ENCODE measurements at regions of chr3 and their contacts with region 1.

Region 1: GRCh38 chr3:51682079-51682478 is 11.0 kb downstream of the TEX264 start:
- DNase-seq: peak; percentile 91
- ATAC-seq: peak; percentile 81
- H3K4me3 Mint-ChIP-seq: peak overlapping the region; percentile 73
- H3K27ac Mint-ChIP-seq: peak overlapping the region; percentile 87
- H3K4me1 Mint-ChIP-seq: peaks cover 96% of the 10 kb centered on the region
- H3K27me3 Mint-ChIP-seq: no peaks in the 10 kb centered on the region

Region 2: GRCh38 chr3:51498876-51499738 is 183.0 kb before region 1 on chr3:
- CTCF ChIA-PET with region 1: interaction called, 179 read pairs
- POLR2A ChIA-PET with region 1: interaction called, 39 read pairs
- DNase-seq: peak; percentile 89
- ATAC-seq: peak; percentile 77
- H3K4me3 Mint-ChIP-seq: peak overlapping the region; percentile 84
- H3K27ac Mint-ChIP-seq: peak overlapping the region; percentile 98
- H3K4me1 Mint-ChIP-seq: peaks cover 23% of the 10 kb centered on the region
- H3K27me3 Mint-ChIP-seq: no peaks in the 10 kb centered on the region

Region 3: GRCh38 chr3:51538459-51539290 is 143.4 kb before region 1 on chr3 and contains the start of gene RAD54L2:
- CTCF ChIA-PET with region 1: interaction called, 18 read pairs
- POLR2A ChIA-PET with region 1: no interaction called
- DNase-seq: peak; percentile 75
- ATAC-seq: peak; percentile 93
- H3K4me3 Mint-ChIP-seq: peak within 1 kb of the TSS; percentile 86
- H3K27ac Mint-ChIP-seq: peak within 1 kb of the TSS; percentile 84
- H3K4me1 Mint-ChIP-seq: peaks cover 33% of the 10 kb centered on the region
- H3K27me3 Mint-ChIP-seq: no peaks in the 10 kb centered on the region
- total RNA-seq, gene RAD54L2: 28.8 to 28.9 TPM

Region 4: DNA sequence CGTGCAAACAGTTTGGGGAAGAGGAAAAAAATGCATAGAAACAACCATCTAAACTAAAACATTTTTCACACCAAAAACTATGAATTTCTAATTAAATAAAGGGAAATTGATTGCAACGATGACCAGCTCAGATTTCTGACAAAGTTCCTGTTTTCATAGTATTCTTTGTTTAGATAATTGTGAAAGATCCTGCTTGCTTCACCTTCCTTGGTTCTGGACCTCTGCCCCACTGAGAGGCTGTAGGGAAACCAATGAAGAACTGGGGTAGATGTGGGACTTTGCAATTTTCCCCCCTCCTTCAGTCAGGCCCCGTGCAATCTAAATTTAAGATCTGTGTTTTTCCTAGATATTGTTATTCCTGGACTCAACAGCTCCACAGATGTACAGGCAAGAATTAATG is 24.8 kb before region 1 on chr3:
- CTCF ChIA-PET with region 1: interaction called, 10 read pairs
- POLR2A ChIA-PET with region 1: no interaction called
- DNase-seq: no peak
- ATAC-seq: no peak
- H3K4me3 Mint-ChIP-seq: no peak overlapping the region
- H3K27ac Mint-ChIP-seq: no peak overlapping the region
- H3K4me1 Mint-ChIP-seq: no peaks in the 10 kb centered on the region
- H3K27me3 Mint-ChIP-seq: no peaks in the 10 kb centered on the region

Region 5: DNA sequence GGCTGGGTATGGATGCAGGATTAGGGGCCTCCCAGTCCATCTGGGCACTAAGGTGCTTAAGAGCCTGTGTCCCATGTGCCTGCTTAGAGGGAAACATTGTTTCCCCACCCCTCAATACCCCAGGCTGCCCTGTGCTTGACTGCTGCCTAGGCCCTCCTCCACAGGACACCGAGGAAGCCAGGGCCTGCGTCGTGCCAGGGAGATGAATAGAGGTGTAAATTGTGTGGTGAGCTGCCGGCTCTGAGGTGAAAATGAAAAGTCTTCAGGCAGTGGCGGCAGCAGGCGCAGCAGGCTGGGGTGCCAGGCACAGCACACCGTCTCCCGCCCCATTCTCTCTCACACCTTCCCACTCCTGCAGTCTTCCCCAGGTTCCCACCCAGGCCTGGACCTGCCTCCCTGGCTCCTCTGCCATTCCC is 10.9 kb after region 1 on chr3:
- CTCF ChIA-PET with region 1: interaction called, 16 read pairs
- POLR2A ChIA-PET with region 1: no interaction called
- DNase-seq: no peak
- ATAC-seq: no peak
- H3K4me3 Mint-ChIP-seq: no peak overlapping the region
- H3K27ac Mint-ChIP-seq: no peak overlapping the region
- H3K4me1 Mint-ChIP-seq: peaks cover 24% of the 10 kb centered on the region
- H3K27me3 Mint-ChIP-seq: no peaks in the 10 kb centered on the region

Region 6: GRCh38 chr3:51799879-51800749 is 118.0 kb after region 1 on chr3:
- CTCF ChIA-PET with region 1: interaction called, 10 read pairs
- POLR2A ChIA-PET with region 1: no interaction called
- DNase-seq: peak; percentile 63
- ATAC-seq: peak; percentile 52
- H3K4me3 Mint-ChIP-seq: no peak overlapping the region
- H3K27ac Mint-ChIP-seq: no peak overlapping the region
- H3K4me1 Mint-ChIP-seq: peaks cover 48% of the 10 kb centered on the region
- H3K27me3 Mint-ChIP-seq: peaks cover 10% of the 10 kb centered on the region